ENCODE measurements at regions of chr20 and their contacts with region 1.

Region 1: DNA sequence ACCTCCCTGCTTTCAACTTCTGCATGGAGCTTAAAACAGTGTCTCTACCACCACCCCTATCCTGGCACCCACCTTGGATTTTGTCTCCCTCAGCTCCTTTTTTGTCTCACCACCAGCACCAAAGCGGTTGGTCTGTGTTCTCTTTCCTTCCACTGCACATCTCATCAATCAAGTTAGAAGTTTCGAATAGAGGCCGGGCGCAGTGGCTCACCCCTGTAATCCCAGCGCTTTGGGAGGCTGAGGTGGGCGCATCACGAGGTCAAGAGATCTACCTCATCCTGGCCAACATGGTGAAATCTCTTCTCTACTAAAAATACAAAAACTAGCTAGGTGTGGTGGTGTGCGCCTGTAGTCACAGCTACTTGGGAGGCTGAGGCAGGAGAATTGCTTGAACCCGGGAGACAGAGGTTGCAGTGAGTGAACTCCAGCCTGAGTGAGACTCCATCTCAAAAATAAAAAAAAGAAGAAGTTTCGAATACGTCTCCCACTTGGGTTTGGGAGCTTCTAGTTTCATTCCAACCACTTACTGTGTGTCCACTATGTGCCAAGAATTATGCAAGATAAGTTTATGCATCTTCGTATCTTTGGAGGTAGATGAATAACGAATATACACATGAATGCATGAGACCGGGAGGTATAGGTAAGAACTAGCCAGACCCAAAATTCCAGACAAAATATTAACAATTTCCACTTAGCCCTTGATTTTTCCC is 5.9 kb downstream of the PCED1A start:
- H3K4me3 Mint-ChIP-seq: no peak overlapping the region
- H3K27ac Mint-ChIP-seq: peak overlapping the region; percentile 77
- H3K4me1 Mint-ChIP-seq: peaks cover 59% of the 10 kb centered on the region
- H3K27me3 Mint-ChIP-seq: peaks cover 8% of the 10 kb centered on the region

Region 2: DNA sequence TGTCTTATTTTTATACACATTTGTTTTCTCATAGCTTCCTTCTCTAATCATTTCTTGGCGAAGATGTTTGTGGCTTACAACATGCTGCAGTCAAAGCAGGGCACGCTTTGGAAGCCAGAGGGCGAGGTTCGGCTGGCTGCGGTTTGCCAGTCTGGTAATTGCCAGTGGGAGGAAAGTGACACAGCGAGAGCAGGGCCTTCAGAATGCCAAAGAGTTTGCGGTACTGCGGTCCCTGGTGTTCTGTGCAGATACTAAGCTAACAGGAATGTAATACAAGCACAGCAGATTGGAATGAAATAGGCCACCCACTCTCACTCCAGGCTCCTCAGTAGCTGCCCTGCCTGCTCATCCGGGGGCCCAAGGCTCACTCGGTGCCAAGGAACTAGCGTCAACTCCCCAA is 597.5 kb before region 1 on chr20:
- intact Hi-C with region 1: no loop called
- H3K4me3 Mint-ChIP-seq: no peak overlapping the region
- H3K27ac Mint-ChIP-seq: no peak overlapping the region
- H3K4me1 Mint-ChIP-seq: peaks cover 15% of the 10 kb centered on the region
- H3K27me3 Mint-ChIP-seq: peaks cover 24% of the 10 kb centered on the region

Region 3: GRCh38 chr20:2752567-2753460 is 81.7 kb before region 1 on chr20:
- intact Hi-C with region 1: no loop called
- H3K4me3 Mint-ChIP-seq: peak overlapping the region; percentile 81
- H3K27ac Mint-ChIP-seq: peak overlapping the region; percentile 67
- H3K4me1 Mint-ChIP-seq: peaks cover 54% of the 10 kb centered on the region
- H3K27me3 Mint-ChIP-seq: peaks cover 80% of the 10 kb centered on the region

Region 4: DNA sequence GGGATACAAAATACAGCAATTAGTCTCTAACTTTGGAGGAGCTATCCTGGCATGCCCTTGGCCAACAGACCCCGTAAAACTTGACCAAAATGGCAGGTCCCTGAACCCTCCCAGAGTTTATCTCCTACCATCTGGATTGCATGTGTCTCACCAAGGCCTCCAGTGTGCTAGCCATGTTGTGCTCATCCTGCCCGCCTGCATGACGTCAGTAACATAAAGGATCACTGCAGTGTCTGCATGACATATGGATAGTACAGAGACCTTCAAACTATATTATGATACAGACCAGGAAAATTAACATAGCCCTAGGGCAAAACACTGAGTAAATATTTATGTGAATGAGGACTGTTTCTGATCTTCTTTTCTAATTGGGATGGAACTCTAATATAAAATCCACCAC is 59.4 kb before region 1 on chr20:
- intact Hi-C with region 1: loop called (anchors 5 kb)
- H3K4me3 Mint-ChIP-seq: no peak overlapping the region
- H3K27ac Mint-ChIP-seq: peak overlapping the region; percentile 60
- H3K4me1 Mint-ChIP-seq: peaks cover 39% of the 10 kb centered on the region
- H3K27me3 Mint-ChIP-seq: peaks cover 7% of the 10 kb centered on the region

Region 5: DNA sequence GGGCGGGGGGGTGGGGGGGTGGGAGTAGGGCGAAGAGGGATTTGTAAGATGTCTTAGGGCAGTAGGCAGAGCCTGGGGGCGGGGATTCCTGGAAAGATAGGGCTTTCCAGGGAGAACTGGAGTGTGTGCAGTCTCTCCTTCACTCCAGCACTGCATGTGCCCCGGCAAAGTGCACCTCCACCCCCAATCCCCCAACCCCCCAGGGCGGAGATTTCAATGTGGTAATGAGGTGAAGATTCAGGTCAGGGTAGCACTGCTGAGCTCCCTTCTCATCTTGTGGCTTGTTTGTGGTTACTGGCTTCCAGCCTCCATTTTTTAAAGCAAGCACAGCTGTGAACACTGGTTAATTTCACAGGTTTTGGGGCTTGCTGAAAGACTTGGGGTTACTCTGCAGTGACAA is 12.5 kb before region 1 on chr20:
- intact Hi-C with region 1: no loop called
- H3K4me3 Mint-ChIP-seq: no peak overlapping the region
- H3K27ac Mint-ChIP-seq: no peak overlapping the region
- H3K4me1 Mint-ChIP-seq: peaks cover 13% of the 10 kb centered on the region
- H3K27me3 Mint-ChIP-seq: peaks cover 58% of the 10 kb centered on the region

Region 6: DNA sequence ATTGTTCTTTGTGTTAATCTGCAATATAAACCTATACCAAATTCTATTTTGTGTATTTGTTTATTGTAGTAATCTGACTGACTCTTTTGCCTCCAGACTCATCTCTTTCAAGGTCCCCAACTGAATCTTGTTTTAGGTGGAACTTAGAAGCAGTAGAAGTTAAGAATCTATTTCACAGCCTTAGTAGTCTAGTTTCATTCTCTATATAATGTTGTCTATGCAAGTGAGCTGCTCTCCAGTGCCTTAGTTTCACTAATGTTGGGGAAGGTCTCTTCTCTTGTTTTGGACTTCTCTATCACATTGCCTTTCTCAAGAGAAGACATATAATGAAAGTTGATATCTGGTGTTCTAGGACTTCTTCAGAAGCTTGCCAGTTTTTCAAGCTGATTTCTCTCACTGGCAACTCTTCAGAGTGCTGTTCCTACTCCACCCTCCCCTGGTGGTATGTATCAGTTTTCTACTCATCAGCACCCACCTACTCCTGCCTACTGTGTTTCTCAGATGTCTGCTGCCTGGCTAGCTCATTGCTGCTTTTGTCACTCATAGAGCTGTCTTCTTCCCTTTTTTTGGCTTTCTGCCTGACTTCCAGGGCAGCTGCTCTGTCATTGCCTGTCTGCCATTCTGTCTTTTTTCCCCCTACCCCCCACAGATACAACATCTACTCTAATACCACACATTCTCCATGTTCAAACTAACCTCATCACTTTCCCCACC is 120.9 kb after region 1 on chr20:
- intact Hi-C with region 1: no loop called
- H3K4me3 Mint-ChIP-seq: no peak overlapping the region
- H3K27ac Mint-ChIP-seq: no peak overlapping the region
- H3K4me1 Mint-ChIP-seq: peaks cover 16% of the 10 kb centered on the region
- H3K27me3 Mint-ChIP-seq: no peaks in the 10 kb centered on the region

Measured in dendritic cell treated with granulocyte-macrophage colony-stimulating factor and Interleukin-4, amounts not matched to agents 40 ng/mL and 50 ng/mL, for 4 days (primary cell).